Natural killer cell (primary cell): ENCODE measurements at regions of chrX and their contacts with region 1.

Region 1: DNA sequence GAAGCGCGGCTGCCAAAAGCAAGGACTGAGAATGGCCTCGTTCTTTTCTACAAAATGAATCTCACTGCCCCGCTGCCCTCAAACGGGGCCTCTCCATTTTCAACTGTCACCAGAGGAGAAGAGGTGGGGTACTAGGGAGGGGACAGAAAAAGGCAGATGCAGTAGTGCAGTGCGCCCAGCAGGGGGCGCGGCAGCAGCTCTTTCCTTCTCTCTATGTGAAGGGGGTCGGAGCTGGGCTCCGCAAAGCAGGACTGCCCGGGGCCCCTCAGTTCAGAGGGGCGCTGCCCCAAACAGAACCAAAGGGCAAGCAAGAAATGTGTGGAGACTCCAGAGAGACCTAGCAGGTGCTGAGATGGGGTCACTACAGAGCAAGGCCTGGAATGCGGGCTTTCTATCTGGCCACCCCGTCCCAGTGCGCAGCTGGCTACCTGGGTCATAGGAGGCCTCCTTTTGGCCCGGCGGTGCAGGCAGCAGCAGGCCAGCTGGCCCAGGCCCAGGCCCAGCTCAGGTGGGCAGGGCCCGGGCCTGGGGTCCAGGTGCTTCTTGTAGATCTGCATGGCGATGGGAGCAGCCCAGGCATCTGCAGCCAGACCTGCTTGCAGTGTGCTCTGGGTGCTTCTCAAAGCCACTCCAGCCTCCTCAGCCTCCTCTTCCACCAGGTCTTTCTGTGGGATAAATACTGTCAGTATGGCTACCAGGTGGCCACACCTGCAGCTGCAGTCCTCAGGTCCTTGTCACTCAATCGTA is 5.9 kb downstream of the IRAK1 start:
- DNase-seq: peak; percentile 43 to 77
- ATAC-seq: peak; percentile 79 to 95 (median 83)
- H3K4me3 ChIP-seq: no peak overlapping the region
- H3K4me3 Mint-ChIP-seq: no peak overlapping the region
- H3K27ac ChIP-seq: peak overlapping the region; percentile 14
- H3K27ac Mint-ChIP-seq: peak overlapping the region in 1 of 2 donors; percentile 40
- H3K4me1 ChIP-seq: peaks cover 30% of the 10 kb centered on the region
- H3K4me1 Mint-ChIP-seq: no peaks in the 10 kb centered on the region
- H3K27me3 ChIP-seq: no peaks in the 10 kb centered on the region
- H3K27me3 Mint-ChIP-seq: no peaks in the 10 kb centered on the region
- CTCF ChIP-seq: peak; percentile 78

Region 2: GRCh38 chrX:154051201-154051810 is 37.5 kb after region 1 on chrX:
- intact Hi-C with region 1: loop called (anchors 1 kb)
- DNase-seq: peak; percentile 47 to 81
- ATAC-seq: peak; percentile 73 to 90 (median 84)
- H3K4me3 ChIP-seq: no peak overlapping the region
- H3K4me3 Mint-ChIP-seq: no peak overlapping the region
- H3K27ac ChIP-seq: no peak overlapping the region
- H3K27ac Mint-ChIP-seq: peak overlapping the region; percentile 37 to 78
- H3K4me1 ChIP-seq: peaks cover 8% of the 10 kb centered on the region
- H3K4me1 Mint-ChIP-seq: peaks cover 28 to 47% of the 10 kb centered on the region in 2 donors
- H3K27me3 ChIP-seq: no peaks in the 10 kb centered on the region
- H3K27me3 Mint-ChIP-seq: no peaks in the 10 kb centered on the region
- CTCF ChIP-seq: peak; percentile 56

Region 3: GRCh38 chrX:154793084-154793795 is 779.5 kb after region 1 on chrX:
- intact Hi-C with region 1: no loop called
- DNase-seq: no peak
- ATAC-seq: no peak
- H3K4me3 ChIP-seq: no peak overlapping the region
- H3K4me3 Mint-ChIP-seq: no peak overlapping the region
- H3K27ac ChIP-seq: no peak overlapping the region
- H3K27ac Mint-ChIP-seq: no peak overlapping the region
- H3K4me1 ChIP-seq: no peaks in the 10 kb centered on the region
- H3K4me1 Mint-ChIP-seq: no peaks in the 10 kb centered on the region
- H3K27me3 ChIP-seq: no peaks in the 10 kb centered on the region
- H3K27me3 Mint-ChIP-seq: no peaks in the 10 kb centered on the region
- CTCF ChIP-seq: no peak